Natural killer cell (primary cell): ENCODE measurements at regions of chr10 and their contacts with region 1.

Region 1: GRCh38 chr10:60816628-60817397 is 38.5 kb downstream of the CDK1 start:
- DNase-seq: peak in 1 of 2 donors; percentile 77
- ATAC-seq: peak; percentile 64 to 85 (median 82)
- H3K4me3 ChIP-seq: no peak overlapping the region
- H3K4me3 Mint-ChIP-seq: no peak overlapping the region
- H3K27ac ChIP-seq: no peak overlapping the region
- H3K27ac Mint-ChIP-seq: no peak overlapping the region
- H3K4me1 ChIP-seq: no peaks in the 10 kb centered on the region
- H3K4me1 Mint-ChIP-seq: peaks cover 12 to 22% of the 10 kb centered on the region in 2 donors
- H3K27me3 ChIP-seq: no peaks in the 10 kb centered on the region
- H3K27me3 Mint-ChIP-seq: no peaks in the 10 kb centered on the region
- CTCF ChIP-seq: peak; percentile 75

Region 2: GRCh38 chr10:60853107-60853506 is 36.3 kb after region 1 on chr10:
- intact Hi-C with region 1: no loop called
- DNase-seq: no peak
- ATAC-seq: no peak
- H3K4me3 ChIP-seq: no peak overlapping the region
- H3K4me3 Mint-ChIP-seq: no peak overlapping the region
- H3K27ac ChIP-seq: no peak overlapping the region
- H3K27ac Mint-ChIP-seq: no peak overlapping the region
- H3K4me1 ChIP-seq: no peaks in the 10 kb centered on the region
- H3K4me1 Mint-ChIP-seq: no peaks in the 10 kb centered on the region
- H3K27me3 ChIP-seq: no peaks in the 10 kb centered on the region
- H3K27me3 Mint-ChIP-seq: peaks cover 0 to 2% of the 10 kb centered on the region in 2 donors
- CTCF ChIP-seq: no peak

Region 3: GRCh38 chr10:60964257-60965235 is 147.7 kb after region 1 on chr10:
- intact Hi-C with region 1: loop called (anchors 1 kb)
- DNase-seq: peak; percentile 27 to 67
- ATAC-seq: peak in 2 of 3 donors; percentile 42 to 67
- H3K4me3 ChIP-seq: no peak overlapping the region
- H3K4me3 Mint-ChIP-seq: no peak overlapping the region
- H3K27ac ChIP-seq: no peak overlapping the region
- H3K27ac Mint-ChIP-seq: no peak overlapping the region
- H3K4me1 ChIP-seq: no peaks in the 10 kb centered on the region
- H3K4me1 Mint-ChIP-seq: no peaks in the 10 kb centered on the region
- H3K27me3 ChIP-seq: no peaks in the 10 kb centered on the region
- H3K27me3 Mint-ChIP-seq: peaks cover 6 to 30% of the 10 kb centered on the region in 2 donors
- CTCF ChIP-seq: peak; percentile 83

Region 4: GRCh38 chr10:61140765-61141392 is 324.1 kb after region 1 on chr10:
- intact Hi-C with region 1: no loop called
- DNase-seq: peak in 1 of 2 donors; percentile 41
- ATAC-seq: peak in 1 of 3 donors; percentile 53
- H3K4me3 ChIP-seq: no peak overlapping the region
- H3K4me3 Mint-ChIP-seq: no peak overlapping the region
- H3K27ac ChIP-seq: no peak overlapping the region
- H3K27ac Mint-ChIP-seq: no peak overlapping the region
- H3K4me1 ChIP-seq: no peaks in the 10 kb centered on the region
- H3K4me1 Mint-ChIP-seq: no peaks in the 10 kb centered on the region
- H3K27me3 ChIP-seq: no peaks in the 10 kb centered on the region
- H3K27me3 Mint-ChIP-seq: peaks cover 6% of the 10 kb centered on the region in 2 donors
- CTCF ChIP-seq: peak; percentile 70

Region 5: DNA sequence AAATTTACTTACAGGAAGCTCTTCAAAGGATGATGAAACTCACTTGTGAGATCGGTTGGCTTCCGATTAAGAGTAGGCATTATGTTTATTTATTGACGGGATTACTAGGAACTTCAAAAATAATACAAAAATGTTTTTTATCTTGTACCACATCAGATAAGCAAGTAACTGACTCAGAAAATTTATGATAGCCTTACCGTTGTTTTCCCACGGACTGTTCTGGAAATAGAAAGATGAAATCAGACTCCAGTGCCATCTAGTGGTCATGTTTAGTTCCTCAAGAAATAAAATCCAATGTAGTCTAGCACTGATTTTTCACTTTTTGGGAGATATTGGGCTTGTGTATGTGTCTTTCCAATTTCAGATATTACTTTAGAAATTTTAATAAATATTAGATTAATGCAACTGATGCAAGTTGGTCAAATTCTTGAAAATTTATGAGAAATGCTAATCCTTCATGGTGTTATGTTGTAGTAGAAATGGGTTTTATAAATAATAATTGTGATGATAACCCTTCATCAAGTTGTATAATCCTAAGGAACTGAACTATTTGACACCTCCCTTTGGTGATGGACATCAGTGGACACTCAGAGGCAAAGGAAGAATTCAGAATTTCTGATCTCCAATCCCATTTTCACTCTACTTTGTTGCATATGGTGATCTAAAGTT is 467.5 kb after region 1 on chr10:
- intact Hi-C with region 1: loop called (anchors 2 kb)
- DNase-seq: peak in 1 of 2 donors; percentile 67
- ATAC-seq: peak in 2 of 3 donors; percentile 37 to 50
- H3K4me3 ChIP-seq: no peak overlapping the region
- H3K4me3 Mint-ChIP-seq: peak overlapping the region; percentile 60
- H3K27ac ChIP-seq: no peak overlapping the region
- H3K27ac Mint-ChIP-seq: peak overlapping the region in 1 of 2 donors; percentile 57
- H3K4me1 ChIP-seq: peaks cover 4% of the 10 kb centered on the region
- H3K4me1 Mint-ChIP-seq: peaks cover 31 to 41% of the 10 kb centered on the region in 2 donors
- H3K27me3 ChIP-seq: no peaks in the 10 kb centered on the region
- H3K27me3 Mint-ChIP-seq: no peaks in the 10 kb centered on the region
- CTCF ChIP-seq: peak; percentile 88

Region 6: DNA sequence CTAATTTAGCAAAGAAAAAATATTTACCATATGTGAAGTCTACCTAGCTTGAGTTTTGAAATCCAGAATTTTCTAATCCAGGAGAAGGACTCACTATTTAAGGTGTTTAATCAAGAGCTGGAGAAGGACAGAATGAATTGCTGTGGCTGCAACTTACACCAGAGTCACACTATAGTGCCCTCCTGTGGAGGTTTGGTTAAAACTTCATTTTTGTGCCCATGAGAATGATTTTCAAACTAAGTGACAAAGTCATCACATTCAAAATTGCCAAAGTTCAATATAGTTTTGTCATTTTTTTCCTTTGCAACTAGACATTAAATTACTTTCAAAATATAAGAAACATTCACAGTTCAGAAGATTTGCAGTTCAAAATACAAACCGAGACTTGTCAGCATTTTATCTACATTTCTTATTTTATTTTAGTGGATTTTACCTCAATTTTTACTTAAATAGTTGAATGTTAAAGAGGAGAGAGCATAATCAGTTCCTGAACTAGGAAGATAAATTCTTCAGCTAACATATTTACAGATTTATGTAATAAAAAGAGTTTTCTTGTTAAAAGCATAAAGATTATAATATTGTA is 916.6 kb after region 1 on chr10:
- intact Hi-C with region 1: loop called (anchors 2 kb)
- DNase-seq: peak in 1 of 2 donors; percentile 40
- ATAC-seq: peak in 1 of 3 donors; percentile 53
- H3K4me3 ChIP-seq: no peak overlapping the region
- H3K4me3 Mint-ChIP-seq: no peak overlapping the region
- H3K27ac ChIP-seq: no peak overlapping the region
- H3K27ac Mint-ChIP-seq: no peak overlapping the region
- H3K4me1 ChIP-seq: no peaks in the 10 kb centered on the region
- H3K4me1 Mint-ChIP-seq: peaks cover 15 to 16% of the 10 kb centered on the region in 2 donors
- H3K27me3 ChIP-seq: peaks cover 2% of the 10 kb centered on the region
- H3K27me3 Mint-ChIP-seq: peaks cover 18 to 31% of the 10 kb centered on the region in 2 donors
- CTCF ChIP-seq: peak; percentile 57

Region 7: GRCh38 chr10:61835069-61835945 is 1018.5 kb after region 1 on chr10:
- intact Hi-C with region 1: loop called (anchors 5 kb)
- DNase-seq: peak in 1 of 2 donors; percentile 47
- ATAC-seq: peak in 1 of 3 donors; percentile 37
- H3K4me3 ChIP-seq: no peak overlapping the region
- H3K4me3 Mint-ChIP-seq: no peak overlapping the region
- H3K27ac ChIP-seq: no peak overlapping the region
- H3K27ac Mint-ChIP-seq: no peak overlapping the region
- H3K4me1 ChIP-seq: no peaks in the 10 kb centered on the region
- H3K4me1 Mint-ChIP-seq: no peaks in the 10 kb centered on the region
- H3K27me3 ChIP-seq: no peaks in the 10 kb centered on the region
- H3K27me3 Mint-ChIP-seq: no peaks in the 10 kb centered on the region
- CTCF ChIP-seq: no peak